ENCODE measurements at regions of chr13 and their contacts with region 1.

Region 1: GRCh38 chr13:23871616-23872220 is 17.5 kb downstream of the MIPEP start:
- DNase-seq: peak; percentile 44
- ATAC-seq: no peak
- H3K4me3 ChIP-seq: no peak overlapping the region
- H3K4me3 Mint-ChIP-seq: no peak overlapping the region
- H3K27ac ChIP-seq: no peak overlapping the region
- H3K27ac Mint-ChIP-seq: no peak overlapping the region
- H3K4me1 ChIP-seq: peaks cover 10 to 12% of the 10 kb centered on the region in 2 donors
- H3K4me1 Mint-ChIP-seq: peaks cover 13% of the 10 kb centered on the region
- H3K27me3 ChIP-seq: no peaks in the 10 kb centered on the region
- H3K27me3 Mint-ChIP-seq: no peaks in the 10 kb centered on the region
- CTCF ChIP-seq: peak; percentile 90

Region 2: GRCh38 chr13:23411706-23412105 is 460.0 kb before region 1 on chr13:
- CTCF ChIA-PET with region 1: no interaction called
- POLR2A ChIA-PET with region 1: no interaction called
- intact Hi-C with region 1: loop called (anchors 1 kb)
- DNase-seq: no peak
- ATAC-seq: no peak
- H3K4me3 ChIP-seq: no peak overlapping the region
- H3K4me3 Mint-ChIP-seq: no peak overlapping the region
- H3K27ac ChIP-seq: no peak overlapping the region
- H3K27ac Mint-ChIP-seq: no peak overlapping the region
- H3K4me1 ChIP-seq: no peaks in the 10 kb centered on the region
- H3K4me1 Mint-ChIP-seq: peaks cover 2% of the 10 kb centered on the region
- H3K27me3 ChIP-seq: peaks cover 0 to 6% (median 3%) of the 10 kb centered on the region in 4 experiments
- H3K27me3 Mint-ChIP-seq: peaks cover 14% of the 10 kb centered on the region
- CTCF ChIP-seq: no peak

Region 3: DNA sequence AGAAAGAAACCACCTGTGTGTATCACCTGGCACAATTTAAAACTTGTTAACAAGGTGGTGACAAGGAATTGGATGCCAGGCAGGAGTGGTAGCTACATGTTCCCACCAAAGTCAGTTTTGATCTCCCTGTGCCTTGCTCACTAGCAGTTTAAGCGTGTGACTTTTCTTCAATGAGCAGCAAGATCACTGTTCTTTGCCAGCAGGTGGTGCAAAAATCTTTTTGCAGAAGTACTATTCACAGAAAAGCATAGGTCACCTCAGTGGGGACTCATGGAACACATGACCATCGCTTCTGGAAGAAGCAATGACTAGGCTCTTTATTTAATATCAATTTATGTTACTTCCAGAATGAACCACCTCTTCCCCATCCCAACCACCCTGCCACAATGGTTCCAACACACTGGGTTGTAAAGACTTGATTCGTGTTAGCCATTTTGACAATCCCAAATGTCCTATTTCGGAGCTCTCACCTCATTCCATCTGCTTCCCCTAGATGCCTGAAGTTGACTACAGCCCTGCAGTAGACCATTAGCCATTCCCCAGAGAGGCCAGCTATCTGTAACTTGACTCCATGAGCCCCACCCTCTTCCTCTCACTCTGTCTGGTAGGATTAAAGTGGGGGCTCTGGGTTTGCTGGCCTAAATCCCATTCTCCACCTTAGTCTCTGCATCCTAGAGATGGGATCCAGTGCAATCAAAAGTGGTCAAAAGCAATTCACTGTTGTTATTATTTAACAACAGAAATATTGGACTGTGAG is 360.6 kb before region 1 on chr13:
- CTCF ChIA-PET with region 1: interaction called, 3 read pairs
- POLR2A ChIA-PET with region 1: no interaction called
- intact Hi-C with region 1: loop called (anchors 1 kb)
- DNase-seq: peak; percentile 34
- ATAC-seq: no peak
- H3K4me3 ChIP-seq: no peak overlapping the region
- H3K4me3 Mint-ChIP-seq: no peak overlapping the region
- H3K27ac ChIP-seq: no peak overlapping the region
- H3K27ac Mint-ChIP-seq: no peak overlapping the region
- H3K4me1 ChIP-seq: no peaks in the 10 kb centered on the region
- H3K4me1 Mint-ChIP-seq: no peaks in the 10 kb centered on the region
- H3K27me3 ChIP-seq: peaks cover 0 to 4% (median 0%) of the 10 kb centered on the region in 4 experiments
- H3K27me3 Mint-ChIP-seq: peaks cover 31% of the 10 kb centered on the region
- CTCF ChIP-seq: peak; percentile 21

Region 4: DNA sequence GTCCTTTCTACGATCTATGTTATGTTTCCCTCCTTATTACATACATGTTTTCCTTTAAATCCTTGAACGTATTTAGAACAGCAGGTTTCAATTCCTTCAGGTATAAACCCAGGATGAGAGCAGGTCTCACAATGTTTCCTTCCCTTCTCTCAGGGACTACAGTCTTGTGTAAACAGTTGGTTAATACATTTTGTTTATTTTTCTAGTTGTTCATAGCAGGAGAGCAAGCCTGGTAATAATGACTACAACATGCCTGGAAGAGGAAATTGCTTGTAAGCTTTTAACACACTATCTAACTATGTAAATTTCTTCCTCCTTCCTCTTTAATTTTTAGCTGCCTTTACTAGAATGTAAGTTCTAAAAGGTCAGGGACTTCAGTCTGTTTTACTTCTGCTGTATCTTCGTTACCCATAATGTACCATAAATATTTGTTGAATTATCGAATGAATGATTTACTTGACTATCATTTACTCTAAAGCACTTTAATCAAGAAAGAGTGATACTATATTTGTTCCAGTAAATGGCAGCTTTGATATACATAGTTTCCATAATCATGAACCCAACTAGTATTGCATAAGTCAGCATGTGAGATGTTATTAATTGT is 330.4 kb before region 1 on chr13:
- CTCF ChIA-PET with region 1: no interaction called
- POLR2A ChIA-PET with region 1: no interaction called
- intact Hi-C with region 1: no loop called
- DNase-seq: no peak
- ATAC-seq: no peak
- H3K4me3 ChIP-seq: no peak overlapping the region
- H3K4me3 Mint-ChIP-seq: no peak overlapping the region
- H3K27ac ChIP-seq: no peak overlapping the region
- H3K27ac Mint-ChIP-seq: no peak overlapping the region
- H3K4me1 ChIP-seq: no peaks in the 10 kb centered on the region
- H3K4me1 Mint-ChIP-seq: no peaks in the 10 kb centered on the region
- H3K27me3 ChIP-seq: peaks cover 0 to 7% (median 3%) of the 10 kb centered on the region in 4 experiments
- H3K27me3 Mint-ChIP-seq: peaks cover 29% of the 10 kb centered on the region
- CTCF ChIP-seq: no peak

Region 5: DNA sequence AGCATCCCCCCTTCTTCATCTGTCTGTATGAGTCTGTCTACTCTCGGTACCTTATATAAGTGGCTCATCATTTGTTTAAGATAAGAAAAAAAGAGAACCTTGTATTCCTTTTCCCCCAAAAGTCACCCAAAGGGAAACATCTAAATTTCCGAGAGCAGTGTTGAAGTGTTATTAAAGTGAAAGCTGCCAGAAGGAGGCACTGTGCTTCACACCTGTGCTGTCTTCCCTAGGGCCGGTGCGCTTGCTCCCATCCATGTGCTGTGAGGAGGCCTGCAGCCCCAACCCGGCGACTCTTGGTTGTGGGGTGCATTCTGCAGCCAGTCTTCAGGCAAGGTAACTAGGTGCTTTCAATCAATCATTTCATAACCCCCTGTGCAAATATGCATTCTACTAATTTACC is 204.0 kb before region 1 on chr13:
- CTCF ChIA-PET with region 1: interaction called, 6 read pairs
- POLR2A ChIA-PET with region 1: no interaction called
- intact Hi-C with region 1: loop called (anchors 1 kb)
- DNase-seq: no peak
- ATAC-seq: no peak
- H3K4me3 ChIP-seq: no peak overlapping the region
- H3K4me3 Mint-ChIP-seq: no peak overlapping the region
- H3K27ac ChIP-seq: no peak overlapping the region
- H3K27ac Mint-ChIP-seq: no peak overlapping the region
- H3K4me1 ChIP-seq: no peaks in the 10 kb centered on the region
- H3K4me1 Mint-ChIP-seq: no peaks in the 10 kb centered on the region
- H3K27me3 ChIP-seq: peaks cover 0 to 7% (median 0%) of the 10 kb centered on the region in 4 experiments
- H3K27me3 Mint-ChIP-seq: peaks cover 16% of the 10 kb centered on the region
- CTCF ChIP-seq: peak; percentile 9

Region 6: GRCh38 chr13:23810685-23811240 is 61.0 kb before region 1 on chr13:
- CTCF ChIA-PET with region 1: interaction called, 5 read pairs
- POLR2A ChIA-PET with region 1: no interaction called
- intact Hi-C with region 1: loop called (anchors 2 kb)
- DNase-seq: peak; percentile 67
- ATAC-seq: peak; percentile 56
- H3K4me3 ChIP-seq: no peak overlapping the region
- H3K4me3 Mint-ChIP-seq: peak overlapping the region; percentile 23
- H3K27ac ChIP-seq: peak overlapping the region in 1 of 2 donors; percentile 50
- H3K27ac Mint-ChIP-seq: peak overlapping the region; percentile 43
- H3K4me1 ChIP-seq: peaks cover 54 to 59% of the 10 kb centered on the region in 2 donors
- H3K4me1 Mint-ChIP-seq: peaks cover 43% of the 10 kb centered on the region
- H3K27me3 ChIP-seq: peaks cover 0 to 2% (median 0%) of the 10 kb centered on the region in 4 experiments
- H3K27me3 Mint-ChIP-seq: no peaks in the 10 kb centered on the region
- CTCF ChIP-seq: peak; percentile 79

Measured in B cell (primary cell).